K562 (cell line): ENCODE measurements at regions of chr2 and their contacts with region 1.

Region 1: GRCh38 chr2:42859006-42859552 is 66.7 kb upstream of the HAAO start:
- DNase-seq: peak; percentile 78 to 85 (median 81)
- ATAC-seq: peak; percentile 72
- H3K4me3 ChIP-seq: no peak overlapping the region
- H3K27ac ChIP-seq: no peak overlapping the region
- H3K4me1 ChIP-seq: peaks cover 0 to 15% of the 10 kb centered on the region in 2 experiments; a peak in 3 of 5 replicates
- H3K27me3 ChIP-seq: no peaks in the 10 kb centered on the region
- CTCF ChIP-seq: peak; percentile 85 to 97 (median 86)
- EP300 ChIP-seq: no peak
- POLR2A ChIP-seq: no peak
- RAD21 ChIP-seq: peak; percentile 98 to 99

Region 2: DNA sequence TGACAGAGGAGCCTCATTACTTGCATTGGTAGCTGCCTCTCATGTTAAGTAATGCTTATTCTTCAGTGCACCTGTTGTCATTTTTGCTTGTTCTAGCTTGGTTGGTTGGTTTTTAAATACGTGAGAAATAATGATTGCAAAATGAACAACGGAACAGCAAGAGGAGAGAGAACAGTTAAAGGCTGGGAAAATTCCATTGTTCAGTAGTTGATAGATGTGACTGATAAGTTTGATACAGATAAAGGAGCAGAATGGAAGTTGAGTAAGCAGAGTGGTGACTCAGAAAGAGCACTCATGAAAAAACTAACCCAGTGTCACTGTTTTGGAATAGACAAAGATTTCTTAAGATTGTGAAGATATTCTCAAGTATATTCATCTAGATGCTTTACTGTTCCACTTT is 240.1 kb before region 1 on chr2:
- CTCF ChIA-PET with region 1: no interaction called
- POLR2A ChIA-PET with region 1: no interaction called
- in situ Hi-C with region 1: no loop called
- intact Hi-C with region 1: no loop called
- DNase-seq: no peak
- ATAC-seq: no peak
- H3K4me3 ChIP-seq: no peak overlapping the region
- H3K27ac ChIP-seq: no peak overlapping the region
- H3K4me1 ChIP-seq: no peaks in the 10 kb centered on the region
- H3K27me3 ChIP-seq: no peaks in the 10 kb centered on the region
- CTCF ChIP-seq: no peak
- EP300 ChIP-seq: no peak
- POLR2A ChIP-seq: no peak
- RAD21 ChIP-seq: no peak

Region 3: GRCh38 chr2:42917425-42917927 is 58.4 kb after region 1 on chr2:
- CTCF ChIA-PET with region 1: interaction called, 5 read pairs
- POLR2A ChIA-PET with region 1: no interaction called
- in situ Hi-C with region 1: no loop called
- intact Hi-C with region 1: loop called (anchors 1 kb)
- DNase-seq: peak in 2 of 4 experiments; percentile 46 to 81
- ATAC-seq: peak; percentile 73
- H3K4me3 ChIP-seq: no peak overlapping the region
- H3K27ac ChIP-seq: peak overlapping the region; percentile 40; the same call in 1 of the 3 replicates
- H3K4me1 ChIP-seq: peaks cover 21 to 43% of the 10 kb centered on the region in 2 experiments
- H3K27me3 ChIP-seq: no peaks in the 10 kb centered on the region
- CTCF ChIP-seq: no peak
- EP300 ChIP-seq: no peak
- POLR2A ChIP-seq: no peak
- RAD21 ChIP-seq: no peak

Region 4: DNA sequence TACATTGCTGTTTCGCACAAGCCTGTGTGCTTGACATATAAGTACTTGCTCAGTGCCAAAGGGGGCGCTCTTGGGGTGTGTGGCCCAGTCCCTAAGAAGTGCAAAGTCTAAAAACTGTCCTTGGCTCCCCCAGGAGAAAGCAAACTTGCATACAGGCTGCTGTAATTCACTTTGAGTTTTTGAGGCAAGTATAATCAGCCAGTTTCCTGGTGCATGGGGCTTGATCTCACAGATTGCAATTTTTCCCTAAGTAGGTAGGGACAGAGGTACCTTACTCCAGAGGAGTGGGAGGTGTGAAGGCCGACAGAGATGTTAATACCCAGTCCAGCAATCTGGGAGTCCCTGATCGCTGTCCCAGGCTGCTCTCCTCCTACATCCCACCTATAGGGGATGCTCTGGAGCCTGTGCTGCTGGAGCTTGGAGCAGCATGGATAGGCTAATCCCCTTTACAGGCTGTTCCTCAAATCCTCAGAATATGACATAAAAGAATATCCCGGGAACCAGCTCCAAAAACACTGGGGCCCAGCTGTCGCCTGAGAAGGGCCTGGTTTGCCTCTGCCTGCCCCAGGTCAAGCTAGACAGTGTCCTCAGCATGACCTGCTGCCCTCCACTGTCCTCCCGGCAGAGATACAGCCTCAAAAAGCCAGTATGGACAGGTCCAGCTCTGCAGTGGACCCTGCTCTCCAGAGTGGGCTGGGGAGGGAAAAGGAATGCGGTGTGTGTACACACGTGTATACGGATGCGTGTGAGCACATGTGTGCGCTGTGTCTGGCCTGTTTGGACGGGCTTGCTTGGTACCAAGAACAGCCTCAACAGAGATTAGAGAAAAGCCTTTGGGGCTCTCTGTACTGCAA is 69.8 kb after region 1 on chr2:
- CTCF ChIA-PET with region 1: interaction called, 8 read pairs
- POLR2A ChIA-PET with region 1: interaction called, 3 read pairs
- in situ Hi-C with region 1: no loop called
- intact Hi-C with region 1: loop called (anchors 1 kb)
- DNase-seq: peak; percentile 69 to 87 (median 70)
- ATAC-seq: peak; percentile 79
- H3K4me3 ChIP-seq: no peak overlapping the region
- H3K27ac ChIP-seq: peak overlapping the region; percentile 91
- H3K4me1 ChIP-seq: peaks cover 69 to 76% of the 10 kb centered on the region in 2 experiments
- H3K27me3 ChIP-seq: no peaks in the 10 kb centered on the region
- CTCF ChIP-seq: peak; percentile 75 to 81 (median 80)
- EP300 ChIP-seq: peak; percentile 33; the same call in 1 of the 2 replicates
- POLR2A ChIP-seq: no peak
- RAD21 ChIP-seq: peak in 1 of 2 experiments; percentile 23; a peak in 2 of 4 replicates

Region 5: GRCh38 chr2:42944779-42945415 is 85.8 kb after region 1 on chr2:
- CTCF ChIA-PET with region 1: interaction called, 8 read pairs
- POLR2A ChIA-PET with region 1: no interaction called
- in situ Hi-C with region 1: no loop called
- intact Hi-C with region 1: loop called (anchors 1 kb)
- DNase-seq: peak in 2 of 4 experiments; percentile 44 to 47
- ATAC-seq: peak; percentile 76
- H3K4me3 ChIP-seq: no peak overlapping the region
- H3K27ac ChIP-seq: no peak overlapping the region
- H3K4me1 ChIP-seq: peaks cover 2 to 18% of the 10 kb centered on the region in 2 experiments; a peak in 4 of 5 replicates
- H3K27me3 ChIP-seq: no peaks in the 10 kb centered on the region
- CTCF ChIP-seq: no peak
- EP300 ChIP-seq: no peak
- POLR2A ChIP-seq: no peak
- RAD21 ChIP-seq: no peak

Region 6: DNA sequence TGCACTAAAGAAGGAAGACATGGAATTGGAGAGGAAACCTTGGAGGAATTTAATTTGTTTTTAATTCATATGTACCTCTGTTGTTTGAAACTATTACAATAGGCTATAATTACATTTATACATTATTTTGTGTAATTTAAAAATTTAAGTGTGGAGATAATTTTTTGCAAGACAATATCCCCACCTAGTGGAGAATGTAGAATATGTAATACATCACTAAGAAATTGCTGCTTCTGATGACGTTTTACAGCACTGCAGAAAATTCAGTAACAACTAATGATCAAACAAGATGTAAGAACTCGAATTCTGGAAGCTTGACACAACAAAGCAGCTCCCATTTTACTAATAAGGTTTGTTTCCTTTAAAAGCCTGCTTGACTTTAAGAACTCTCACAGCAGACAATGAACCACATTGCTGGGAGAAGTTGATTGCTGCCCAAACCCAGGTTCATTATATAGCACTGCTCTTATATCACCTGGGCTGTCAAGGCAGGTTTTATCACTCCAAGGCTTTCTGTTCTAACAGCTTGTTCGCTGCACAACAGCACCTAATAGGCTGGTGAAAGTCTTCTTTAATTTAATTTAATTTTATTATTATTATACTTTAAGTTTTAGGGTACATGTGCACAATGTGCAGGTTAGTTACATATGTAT is 683.3 kb after region 1 on chr2:
- CTCF ChIA-PET with region 1: interaction called, 9 read pairs
- POLR2A ChIA-PET with region 1: no interaction called
- in situ Hi-C with region 1: no loop called
- intact Hi-C with region 1: loop called (anchors 10 kb)
- DNase-seq: peak; percentile 20 to 38 (median 32)
- ATAC-seq: peak; percentile 70
- H3K4me3 ChIP-seq: no peak overlapping the region
- H3K27ac ChIP-seq: no peak overlapping the region
- H3K4me1 ChIP-seq: peaks cover 0 to 4% of the 10 kb centered on the region in 2 experiments; a peak in 1 of 5 replicates
- H3K27me3 ChIP-seq: no peaks in the 10 kb centered on the region
- CTCF ChIP-seq: peak in 2 of 3 experiments; percentile 36 to 72; a peak in 4 of 6 replicates
- EP300 ChIP-seq: no peak
- POLR2A ChIP-seq: no peak
- RAD21 ChIP-seq: peak; percentile 61 to 74